ENCODE measurements at regions of chr17 and their contacts with region 1.

Region 1: DNA sequence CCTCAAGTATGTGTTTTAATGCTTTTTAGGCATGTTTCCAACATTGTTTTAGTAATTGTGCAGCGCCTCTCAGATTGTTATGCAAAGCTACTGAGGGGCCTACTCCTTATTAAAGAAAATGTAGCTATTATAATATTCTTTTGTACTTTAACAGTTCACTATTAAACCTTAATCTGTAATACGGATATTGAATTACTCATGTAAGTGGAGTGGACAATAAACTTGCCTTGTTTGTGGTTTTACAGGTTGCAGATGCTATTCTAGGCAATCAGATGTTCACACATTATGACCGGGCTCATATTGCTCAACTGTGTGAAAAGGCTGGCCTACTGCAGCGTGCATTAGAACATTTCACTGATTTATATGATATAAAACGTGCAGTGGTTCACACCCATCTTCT is 41.0 kb downstream of the PTRH2 start:
- DNase-seq: no peak

Region 2: DNA sequence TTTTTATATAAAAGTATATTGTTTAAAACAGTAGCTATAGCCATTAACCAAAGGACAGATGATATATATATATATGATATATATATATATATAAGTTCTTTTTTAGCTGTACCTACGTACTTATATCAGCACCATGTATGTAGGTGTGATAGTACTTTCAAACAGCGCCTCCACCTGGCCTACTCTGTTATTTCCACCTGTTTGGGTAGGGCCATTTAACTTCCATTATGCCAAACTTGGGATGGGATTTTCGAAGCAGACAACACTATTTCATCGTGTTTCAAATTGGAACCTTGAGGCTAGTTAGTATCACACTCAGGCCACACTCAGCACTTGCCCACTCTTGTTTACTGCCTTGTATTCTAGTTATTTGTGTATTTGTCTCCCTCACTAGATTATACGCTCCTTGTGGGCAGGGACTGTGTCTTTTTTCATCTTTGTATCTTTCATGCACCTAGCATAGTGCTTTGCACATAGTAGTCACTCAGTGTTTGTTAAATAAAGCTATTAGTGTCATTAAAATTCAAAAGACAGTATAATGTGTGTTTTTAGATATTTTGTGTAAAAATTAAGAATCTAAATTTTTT is 58.3 kb before region 1 on chr17:
- intact Hi-C with region 1: no loop called
- DNase-seq: no peak

Region 3: DNA sequence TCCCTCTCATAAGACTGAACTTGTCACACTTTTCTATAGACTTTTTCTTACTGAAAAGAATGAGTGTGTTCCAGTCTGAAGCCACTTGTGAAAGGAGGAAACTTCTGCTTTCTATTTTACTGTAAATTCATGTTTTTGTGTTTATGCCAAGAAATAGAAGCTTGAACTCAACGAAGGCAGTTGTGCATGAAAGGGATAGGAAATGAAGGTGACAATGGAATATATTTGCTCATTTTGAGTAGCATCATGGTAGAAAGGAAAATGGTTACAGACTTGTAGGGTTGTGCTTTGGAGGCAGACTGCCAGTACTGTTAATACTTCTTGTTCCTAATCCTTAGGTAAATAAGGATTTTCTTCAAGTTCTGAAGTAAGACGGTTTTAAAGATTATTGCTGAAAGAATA is 38.5 kb before region 1 on chr17:
- intact Hi-C with region 1: loop called in 1 of 2 experiments (anchors 1 kb)
- DNase-seq: no peak

Measured in posterior vena cava (tissue), 2 donors.